PC-3 (cell line): ENCODE measurements at regions of chr1 and their contacts with region 1.

Region 1: GRCh38 chr1:151327223-151327902 is at the start of gene PI4KB:
- DNase-seq: peak; percentile 100
- ATAC-seq: peak; percentile 83
- H3K4me3 ChIP-seq: peak within 1 kb of the TSS; percentile 72
- H3K27ac ChIP-seq: peak within 1 kb of the TSS; percentile 85
- H3K4me1 ChIP-seq: peaks cover 37% of the 10 kb centered on the region
- H3K27me3 ChIP-seq: no peaks in the 10 kb centered on the region
- CTCF ChIP-seq: no peak
- total RNA-seq, gene PI4KB: 75.6 and 99.5 TPM in 2 replicates

Region 2: DNA sequence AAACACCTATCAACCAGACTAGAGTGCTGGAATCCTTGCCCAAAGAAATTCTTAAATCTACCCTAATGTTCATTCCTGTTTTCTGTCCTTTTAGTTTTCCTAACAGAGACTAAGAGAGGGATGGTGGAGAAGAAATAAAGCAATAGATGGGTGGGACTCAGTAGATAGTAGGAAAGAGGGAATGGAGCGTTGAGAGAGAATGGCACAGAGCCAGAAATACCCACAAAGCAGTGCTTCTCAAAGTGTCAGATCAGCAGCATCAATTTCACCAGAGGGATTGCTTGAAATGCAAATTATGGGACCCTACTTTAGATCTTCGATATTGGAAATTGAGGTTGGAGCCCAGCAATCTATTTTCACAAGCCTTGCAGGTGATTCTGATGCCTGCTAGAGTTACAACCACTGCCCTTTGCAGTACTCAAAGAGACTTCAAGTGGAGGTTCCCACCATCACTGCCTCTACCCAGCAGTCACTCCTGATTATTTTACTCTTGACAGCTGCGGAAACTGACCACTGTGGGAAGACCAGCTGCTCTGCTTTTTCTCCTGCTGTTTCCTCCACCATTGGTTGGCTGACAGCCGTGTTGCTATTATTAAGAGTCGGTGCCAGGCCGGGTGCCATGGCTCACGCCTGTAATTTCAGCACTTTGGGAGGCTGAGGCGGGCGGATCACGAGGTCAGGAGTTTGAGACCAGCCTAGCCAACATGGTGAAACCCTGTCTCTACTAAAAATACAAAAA is 1017.4 kb before region 1 on chr1:
- CTCF ChIA-PET with region 1: no interaction called
- POLR2A ChIA-PET with region 1: interaction called, 12 read pairs
- intact Hi-C with region 1: no loop called
- DNase-seq: no peak
- ATAC-seq: no peak
- H3K4me3 ChIP-seq: no peak overlapping the region
- H3K27ac ChIP-seq: no peak overlapping the region
- H3K4me1 ChIP-seq: no peaks in the 10 kb centered on the region
- H3K27me3 ChIP-seq: no peaks in the 10 kb centered on the region
- CTCF ChIP-seq: no peak

Region 3: DNA sequence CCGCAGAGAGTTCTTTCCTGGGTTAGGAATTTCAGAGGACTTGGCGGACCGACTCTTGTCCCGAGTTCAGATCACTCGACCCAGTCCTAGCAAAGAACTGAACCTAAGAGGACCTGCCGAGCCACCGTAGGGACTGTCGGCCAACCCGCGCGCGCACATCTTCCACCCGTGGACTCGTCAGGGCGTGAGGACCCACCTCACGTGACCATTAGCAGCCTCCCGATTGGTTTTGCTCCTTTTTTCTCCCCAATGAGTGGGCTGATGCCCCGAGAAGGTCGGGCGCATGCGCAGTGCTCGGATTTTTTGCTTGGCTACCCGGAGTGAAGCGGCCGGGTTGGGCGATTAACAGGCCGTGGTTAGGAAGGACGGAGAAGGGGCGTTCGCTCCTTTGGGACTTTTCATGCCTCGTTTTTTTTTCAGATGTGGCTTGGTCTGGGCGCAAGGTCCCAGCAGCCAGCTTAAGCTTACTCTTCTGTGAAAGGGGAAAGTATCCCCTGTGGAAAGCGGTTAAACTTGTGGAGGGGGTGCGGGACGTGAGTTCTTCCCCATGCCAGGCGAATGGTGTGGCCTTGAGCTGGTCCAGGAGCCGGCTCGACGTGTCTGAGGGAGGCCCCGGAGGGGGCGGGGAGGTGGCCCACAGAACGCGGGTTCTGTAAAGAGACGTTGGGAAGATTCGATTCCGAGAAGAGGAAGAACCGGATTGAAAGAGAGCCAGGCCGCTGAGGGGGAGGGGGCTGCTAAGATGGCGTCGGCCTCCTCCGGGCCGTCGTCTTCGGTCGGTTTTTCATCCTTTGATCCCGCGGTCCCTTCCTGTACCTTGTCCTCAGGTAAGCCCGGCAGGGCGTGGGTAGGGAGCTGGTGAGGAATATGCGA is 128.9 kb before region 1 on chr1 and contains the start of gene PIP5K1A:
- CTCF ChIA-PET with region 1: no interaction called
- POLR2A ChIA-PET with region 1: no interaction called
- intact Hi-C with region 1: loop called (anchors 5 kb)
- DNase-seq: peak; percentile 99
- ATAC-seq: peak; percentile 64
- H3K4me3 ChIP-seq: peak within 1 kb of the TSS; percentile 96
- H3K27ac ChIP-seq: peak within 1 kb of the TSS; percentile 83
- H3K4me1 ChIP-seq: peaks cover 37% of the 10 kb centered on the region
- H3K27me3 ChIP-seq: no peaks in the 10 kb centered on the region
- CTCF ChIP-seq: no peak
- total RNA-seq, gene PIP5K1A: 63.3 and 78.3 TPM in 2 replicates

Region 4: GRCh38 chr1:151311589-151312331 is 15.6 kb before region 1 on chr1:
- CTCF ChIA-PET with region 1: interaction called, 4 read pairs
- POLR2A ChIA-PET with region 1: interaction called, 8 read pairs
- intact Hi-C with region 1: loop called (anchors 1 kb)
- DNase-seq: peak; percentile 100
- ATAC-seq: peak; percentile 94
- H3K4me3 ChIP-seq: peak overlapping the region; percentile 39
- H3K27ac ChIP-seq: peak overlapping the region; percentile 91
- H3K4me1 ChIP-seq: peaks cover 51% of the 10 kb centered on the region
- H3K27me3 ChIP-seq: no peaks in the 10 kb centered on the region
- CTCF ChIP-seq: no peak

Region 5: DNA sequence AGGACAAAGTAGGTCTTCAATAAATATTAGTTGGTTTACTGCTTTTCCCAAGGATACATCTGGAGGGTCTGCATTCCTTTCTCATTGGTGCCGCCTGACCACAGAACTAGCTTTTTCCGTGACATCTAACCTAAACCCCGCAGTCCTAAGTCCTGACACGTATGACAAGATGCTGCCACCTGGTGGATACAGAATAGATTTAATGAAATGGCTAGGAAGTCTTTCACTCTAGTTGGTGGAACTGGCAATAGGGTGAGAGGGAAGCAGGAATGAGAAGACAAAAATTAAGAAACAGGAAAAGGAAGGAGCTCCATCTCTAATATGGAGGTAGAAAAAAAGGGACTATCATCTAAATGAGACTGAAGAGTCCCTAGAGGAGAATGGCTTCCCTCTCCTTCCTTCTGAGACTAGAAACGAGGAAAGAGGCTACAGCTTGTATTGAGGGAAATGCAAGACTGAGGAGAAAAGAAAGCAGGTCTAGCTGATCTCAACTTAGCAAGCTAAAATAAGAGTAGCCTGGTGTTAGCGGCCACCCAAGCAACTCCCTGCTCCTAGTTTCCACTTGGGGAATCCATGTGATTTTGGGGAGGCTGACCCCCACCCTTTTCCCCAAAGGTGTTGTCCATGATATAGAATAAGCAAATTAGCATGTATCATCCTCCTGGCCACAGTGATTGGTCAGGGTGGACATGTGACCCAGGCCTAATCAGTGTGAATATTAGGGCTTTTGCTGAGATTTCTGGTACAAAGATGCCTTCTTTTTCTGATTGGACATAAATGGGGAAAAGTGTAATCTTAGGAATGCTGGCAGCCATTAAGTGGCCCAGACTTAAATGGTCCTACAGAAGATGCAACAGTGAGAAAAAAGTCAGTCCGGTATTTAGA is 13.7 kb after region 1 on chr1:
- CTCF ChIA-PET with region 1: interaction called, 35 read pairs
- POLR2A ChIA-PET with region 1: interaction called, 3 read pairs
- intact Hi-C with region 1: loop called (anchors 2 kb)
- DNase-seq: peak; percentile 93
- ATAC-seq: peak; percentile 93
- H3K4me3 ChIP-seq: no peak overlapping the region
- H3K27ac ChIP-seq: no peak overlapping the region
- H3K4me1 ChIP-seq: peaks cover 6% of the 10 kb centered on the region
- H3K27me3 ChIP-seq: no peaks in the 10 kb centered on the region
- CTCF ChIP-seq: peak; percentile 95

Region 6: GRCh38 chr1:151485685-151486255 is 158.4 kb after region 1 on chr1:
- CTCF ChIA-PET with region 1: no interaction called
- POLR2A ChIA-PET with region 1: no interaction called
- intact Hi-C with region 1: no loop called
- DNase-seq: no peak
- ATAC-seq: no peak
- H3K4me3 ChIP-seq: no peak overlapping the region
- H3K27ac ChIP-seq: no peak overlapping the region
- H3K4me1 ChIP-seq: no peaks in the 10 kb centered on the region
- H3K27me3 ChIP-seq: no peaks in the 10 kb centered on the region
- CTCF ChIP-seq: 0 out of 2 replicates have a peak, but pooled peaks have one; percentile 8

Region 7: DNA sequence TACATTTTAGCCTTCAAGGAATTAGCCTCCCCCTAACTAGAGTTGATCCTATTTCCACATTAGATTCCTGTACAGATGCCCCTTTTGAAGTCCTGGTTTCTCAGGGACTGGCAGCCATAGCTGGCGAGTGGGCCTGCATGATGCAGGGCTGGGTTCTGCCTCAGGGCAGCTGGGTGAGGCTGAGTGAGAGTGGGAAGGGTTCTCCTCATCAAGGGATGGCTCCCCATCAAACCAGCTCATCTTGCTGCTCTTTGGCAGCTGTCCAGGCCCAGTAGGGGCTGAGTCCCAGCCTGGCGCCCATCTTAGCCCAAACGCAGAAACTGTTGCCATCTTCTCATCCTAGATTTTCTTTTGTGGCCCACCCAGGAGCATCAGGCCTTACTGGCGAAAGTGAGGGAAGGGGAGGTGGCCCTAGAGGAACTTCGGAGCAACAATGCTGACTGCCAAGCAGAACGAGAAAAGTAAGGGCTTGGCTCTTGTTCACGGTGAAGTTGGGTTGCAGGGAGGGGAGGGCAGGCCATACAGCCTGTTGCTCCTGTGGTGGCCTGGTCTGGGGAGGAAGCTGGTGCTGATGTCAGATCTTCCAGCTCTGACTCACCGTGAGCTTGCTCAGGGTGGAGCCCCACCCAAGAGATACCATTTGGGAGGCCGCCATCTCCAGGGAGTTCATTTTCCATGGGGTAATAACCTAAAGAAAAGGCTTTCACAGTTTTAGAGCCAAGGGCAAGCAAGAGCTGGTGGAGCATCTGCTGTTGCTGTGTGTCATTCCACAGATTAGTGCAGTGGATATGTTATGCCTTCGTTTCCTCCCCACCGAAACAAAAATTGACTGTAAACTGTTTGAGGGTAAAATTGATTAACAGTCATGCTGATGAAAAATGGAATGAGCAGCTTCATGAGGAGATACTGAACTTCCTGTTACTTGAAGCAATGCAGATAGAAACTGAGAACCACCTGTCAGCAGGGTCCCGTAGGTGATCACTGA is 247.5 kb after region 1 on chr1:
- CTCF ChIA-PET with region 1: no interaction called
- POLR2A ChIA-PET with region 1: no interaction called
- intact Hi-C with region 1: no loop called
- DNase-seq: peak; percentile 95
- ATAC-seq: peak; percentile 97
- H3K4me3 ChIP-seq: no peak overlapping the region
- H3K27ac ChIP-seq: peak overlapping the region; percentile 88
- H3K4me1 ChIP-seq: peaks cover 51% of the 10 kb centered on the region
- H3K27me3 ChIP-seq: no peaks in the 10 kb centered on the region
- CTCF ChIP-seq: no peak